ENCODE measurements at regions of chr3 and their contacts with region 1.

Region 1: GRCh38 chr3:25594007-25594502 is 70.7 kb downstream of the TOP2B start:
- DNase-seq: no peak
- ATAC-seq: peak in 3 of 4 donors; percentile 42 to 65 (median 51)
- H3K4me3 ChIP-seq: no peak overlapping the region
- H3K27ac ChIP-seq: peak overlapping the region in 10 of 12 donors; percentile 11 to 74 (median 54)
- H3K4me1 ChIP-seq: peaks cover 0 to 46% (median 34%) of the 10 kb centered on the region in 12 donors
- H3K27me3 ChIP-seq: no peaks in the 10 kb centered on the region
- CTCF ChIP-seq: peak; percentile 71 to 94 (median 82)
- POLR2A ChIP-seq: no peak

Region 2: DNA sequence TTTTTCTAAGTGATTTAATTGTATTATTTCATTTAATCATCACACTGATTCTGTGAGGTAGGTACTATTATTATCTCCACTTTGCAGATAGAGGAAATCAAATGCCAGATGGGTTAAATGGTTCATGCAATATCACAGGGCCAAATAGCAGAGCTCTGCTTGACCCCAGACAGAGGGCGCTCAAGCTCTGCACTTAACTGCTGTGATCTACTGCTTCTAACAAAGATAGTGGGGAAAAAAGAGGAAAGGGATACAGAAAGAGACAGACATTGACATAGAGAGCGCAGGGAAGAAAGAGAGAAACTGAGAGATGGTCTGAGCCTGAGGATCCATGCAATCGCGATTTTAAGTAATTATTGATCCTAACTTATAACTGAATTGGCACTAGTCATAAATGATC is 820.3 kb before region 1 on chr3:
- intact Hi-C with region 1: loop called (anchors 2 to 5 kb)
- DNase-seq: peak; percentile 25 to 68 (median 45)
- ATAC-seq: peak; percentile 67 to 85 (median 78)
- H3K4me3 ChIP-seq: no peak overlapping the region
- H3K27ac ChIP-seq: no peak overlapping the region
- H3K4me1 ChIP-seq: no peaks in the 10 kb centered on the region
- H3K27me3 ChIP-seq: no peaks in the 10 kb centered on the region
- CTCF ChIP-seq: peak; percentile 53 to 84 (median 74)
- POLR2A ChIP-seq: no peak

Region 3: GRCh38 chr3:25027650-25028049 is 566.4 kb before region 1 on chr3:
- intact Hi-C with region 1: loop called (anchors 5 to 10 kb)
- DNase-seq: peak in 1 of 5 donors; percentile 21
- ATAC-seq: no peak
- H3K4me3 ChIP-seq: no peak overlapping the region
- H3K27ac ChIP-seq: no peak overlapping the region
- H3K4me1 ChIP-seq: no peaks in the 10 kb centered on the region
- H3K27me3 ChIP-seq: no peaks in the 10 kb centered on the region
- CTCF ChIP-seq: no peak
- POLR2A ChIP-seq: no peak

Region 4: DNA sequence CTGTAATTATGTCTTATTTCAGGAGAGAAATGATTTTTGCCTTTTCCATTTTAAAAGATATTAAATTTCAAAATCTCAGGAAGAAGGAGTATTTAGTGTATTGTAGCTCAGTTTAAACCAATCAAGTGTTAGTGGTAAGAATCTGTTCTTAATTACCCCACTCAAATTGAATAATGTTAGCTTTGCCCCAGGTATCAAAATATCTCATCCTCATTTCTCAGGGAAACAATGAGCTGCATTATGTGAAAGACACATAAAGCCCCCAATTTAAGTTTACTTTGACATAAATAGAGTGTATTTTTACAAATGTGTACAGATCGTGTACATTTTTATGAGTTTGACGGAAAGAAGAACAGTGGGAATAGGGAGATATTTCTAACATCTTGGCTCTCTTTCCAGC is 483.4 kb before region 1 on chr3:
- intact Hi-C with region 1: loop called in 1 of 10 experiments (anchors 10 kb)
- DNase-seq: no peak
- ATAC-seq: no peak
- H3K4me3 ChIP-seq: no peak overlapping the region
- H3K27ac ChIP-seq: no peak overlapping the region
- H3K4me1 ChIP-seq: peaks cover 0 to 9% (median 0%) of the 10 kb centered on the region in 12 donors
- H3K27me3 ChIP-seq: no peaks in the 10 kb centered on the region
- CTCF ChIP-seq: no peak
- POLR2A ChIP-seq: no peak

Region 5: GRCh38 chr3:25433868-25434267 is 160.2 kb before region 1 on chr3:
- intact Hi-C with region 1: loop called (anchors 1 to 5 kb)
- DNase-seq: peak in 4 of 5 donors; percentile 15 to 66 (median 40)
- ATAC-seq: peak; percentile 53 to 76 (median 68)
- H3K4me3 ChIP-seq: peak overlapping the region in 6 of 12 donors; percentile 8 to 76 (median 17)
- H3K27ac ChIP-seq: peak overlapping the region in 11 of 12 donors; percentile 3 to 98 (median 64)
- H3K4me1 ChIP-seq: peaks cover 0 to 60% (median 25%) of the 10 kb centered on the region in 12 donors
- H3K27me3 ChIP-seq: peaks cover 0 to 7% (median 0%) of the 10 kb centered on the region in 9 donors
- CTCF ChIP-seq: no peak
- POLR2A ChIP-seq: no peak

Region 6: GRCh38 chr3:25678581-25678980 is 84.5 kb after region 1 on chr3:
- intact Hi-C with region 1: no loop called
- DNase-seq: no peak
- ATAC-seq: no peak
- H3K4me3 ChIP-seq: no peak overlapping the region
- H3K27ac ChIP-seq: no peak overlapping the region
- H3K4me1 ChIP-seq: no peaks in the 10 kb centered on the region
- H3K27me3 ChIP-seq: no peaks in the 10 kb centered on the region
- CTCF ChIP-seq: no peak
- POLR2A ChIP-seq: no peak

Measured in heart left ventricle (tissue), 16 donors.